ENCODE measurements at regions of chr15 and their contacts with region 1.

Region 1: DNA sequence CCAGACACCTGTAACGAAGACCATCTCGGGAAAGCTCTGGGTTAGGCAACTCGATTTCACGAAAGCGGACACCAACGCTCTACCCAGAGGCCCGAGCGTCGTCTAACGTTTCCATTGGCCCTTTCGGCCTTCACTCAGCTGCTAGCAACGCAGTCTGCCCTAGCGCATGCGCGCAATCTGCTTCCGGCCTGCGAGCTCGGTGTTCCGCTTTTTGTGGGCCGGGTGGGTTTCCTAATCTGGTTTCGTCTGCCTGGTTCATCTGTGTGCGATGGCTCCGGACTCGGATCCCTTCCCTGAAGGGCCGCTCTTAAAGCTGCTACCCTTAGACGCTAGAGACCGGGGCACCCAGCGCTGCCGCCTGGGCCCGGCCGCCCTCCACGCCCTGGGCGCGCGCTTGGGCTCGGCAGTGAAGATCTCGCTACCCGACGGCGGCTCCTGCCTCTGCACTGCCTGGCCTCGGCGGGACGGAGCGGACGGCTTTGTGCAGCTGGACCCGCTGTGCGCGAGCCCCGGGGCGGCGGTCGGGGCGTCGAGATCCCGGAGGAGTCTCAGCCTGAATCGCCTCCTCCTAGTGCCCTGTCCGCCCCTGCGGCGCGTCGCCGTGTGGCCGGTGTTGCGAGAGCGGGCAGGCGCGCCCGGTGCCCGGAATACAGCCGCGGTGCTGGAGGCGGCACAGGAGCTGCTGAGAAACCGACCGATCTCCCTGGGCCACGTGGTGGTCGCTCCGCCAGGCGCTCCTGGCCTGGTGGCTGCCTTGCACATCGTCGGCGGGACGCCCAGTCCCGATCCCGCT is 24.0 kb upstream of the GATM start:
- DNase-seq: peak; percentile 98
- ATAC-seq: peak; percentile 91
- H3K4me3 ChIP-seq: peak overlapping the region; percentile 62 to 89 (median 86)
- H3K4me3 Mint-ChIP-seq: peak overlapping the region; percentile 96
- H3K27ac ChIP-seq: peak overlapping the region; percentile 88 to 95
- H3K27ac Mint-ChIP-seq: peak overlapping the region; percentile 97
- H3K4me1 ChIP-seq: peaks cover 22% of the 10 kb centered on the region in 2 donors
- H3K4me1 Mint-ChIP-seq: peaks cover 37% of the 10 kb centered on the region
- H3K27me3 ChIP-seq: no peaks in the 10 kb centered on the region
- H3K27me3 Mint-ChIP-seq: no peaks in the 10 kb centered on the region
- CTCF ChIP-seq: no peak

Region 2: GRCh38 chr15:44286814-44287452 is 1115.4 kb before region 1 on chr15:
- CTCF ChIA-PET with region 1: no interaction called
- POLR2A ChIA-PET with region 1: no interaction called
- intact Hi-C with region 1: loop called (anchors 10 kb)
- DNase-seq: peak; percentile 25
- ATAC-seq: no peak
- H3K4me3 ChIP-seq: peak overlapping the region in 4 of 5 experiments; percentile 84 to 100 (median 99)
- H3K4me3 Mint-ChIP-seq: peak overlapping the region; percentile 95
- H3K27ac ChIP-seq: peak overlapping the region; percentile 77 to 95
- H3K27ac Mint-ChIP-seq: peak overlapping the region; percentile 97
- H3K4me1 ChIP-seq: peaks cover 22 to 29% of the 10 kb centered on the region in 2 donors
- H3K4me1 Mint-ChIP-seq: peaks cover 37% of the 10 kb centered on the region
- H3K27me3 ChIP-seq: no peaks in the 10 kb centered on the region
- H3K27me3 Mint-ChIP-seq: peaks cover 4% of the 10 kb centered on the region
- CTCF ChIP-seq: peak; percentile 46

Region 3: GRCh38 chr15:45126535-45127158 is 275.7 kb before region 1 on chr15:
- CTCF ChIA-PET with region 1: interaction called, 28 read pairs
- POLR2A ChIA-PET with region 1: no interaction called
- intact Hi-C with region 1: loop called (anchors 1 kb)
- DNase-seq: peak; percentile 70
- ATAC-seq: peak; percentile 59
- H3K4me3 ChIP-seq: no peak overlapping the region
- H3K4me3 Mint-ChIP-seq: no peak overlapping the region
- H3K27ac ChIP-seq: no peak overlapping the region
- H3K27ac Mint-ChIP-seq: no peak overlapping the region
- H3K4me1 ChIP-seq: peaks cover 15 to 22% of the 10 kb centered on the region in 2 donors
- H3K4me1 Mint-ChIP-seq: peaks cover 8% of the 10 kb centered on the region
- H3K27me3 ChIP-seq: peaks cover 0 to 55% (median 28%) of the 10 kb centered on the region in 4 experiments
- H3K27me3 Mint-ChIP-seq: peaks cover 60% of the 10 kb centered on the region
- CTCF ChIP-seq: peak; percentile 93

Region 4: DNA sequence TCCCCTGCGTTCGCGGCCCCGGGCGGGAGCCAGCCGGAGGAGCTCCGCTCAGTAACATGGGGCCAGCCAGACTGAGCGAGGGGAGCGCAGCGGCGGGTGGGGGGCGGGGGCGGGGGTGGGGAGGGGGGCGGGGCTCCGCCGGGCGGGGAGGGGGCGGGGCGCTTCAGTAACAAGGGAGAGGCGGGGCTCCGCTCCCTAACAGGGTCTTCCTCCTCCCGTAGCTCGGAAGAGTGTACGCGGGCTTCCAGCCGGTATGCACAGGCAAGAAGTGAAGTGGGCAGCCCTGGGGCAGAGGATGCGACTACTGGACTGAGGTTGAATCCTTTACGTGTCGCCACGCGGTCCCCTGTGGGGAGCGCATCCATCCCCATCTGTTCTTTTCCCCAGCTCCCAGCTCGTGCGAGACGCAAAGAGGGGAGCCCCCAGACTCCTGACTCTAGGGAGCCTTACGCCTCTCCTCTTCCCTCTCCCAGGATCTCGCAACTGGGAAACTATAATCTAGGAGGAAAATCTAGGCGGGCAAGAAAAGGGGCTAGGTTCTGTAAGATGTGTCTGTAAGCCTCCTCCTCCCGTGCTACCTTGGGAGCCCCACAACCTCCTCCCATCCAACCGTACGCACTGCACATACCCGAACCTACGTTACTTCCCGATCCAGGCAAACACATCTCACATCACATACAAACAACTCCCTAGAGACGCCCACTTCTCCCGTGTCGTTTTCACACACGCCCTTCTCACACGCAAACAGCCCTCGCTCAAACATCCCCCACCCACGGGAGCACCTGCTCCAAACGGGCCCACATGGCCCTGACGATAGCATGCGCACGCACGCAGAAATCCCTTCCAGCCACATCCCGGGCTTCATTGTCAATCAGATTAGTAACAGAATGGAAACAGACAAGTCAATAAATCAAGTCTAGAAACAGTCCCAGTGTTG is 214.2 kb before region 1 on chr15 and contains the start of gene SHF:
- CTCF ChIA-PET with region 1: interaction called, 4 read pairs
- POLR2A ChIA-PET with region 1: interaction called, 4 read pairs
- intact Hi-C with region 1: loop called (anchors 1 kb)
- DNase-seq: peak; percentile 87
- ATAC-seq: peak; percentile 79
- H3K4me3 ChIP-seq: peak within 1 kb of the TSS; percentile 32 to 98 (median 77)
- H3K4me3 Mint-ChIP-seq: peak within 1 kb of the TSS; percentile 91
- H3K27ac ChIP-seq: peak within 1 kb of the TSS; percentile 73 to 77
- H3K27ac Mint-ChIP-seq: peak within 1 kb of the TSS; percentile 78
- H3K4me1 ChIP-seq: peaks cover 0 to 15% of the 10 kb centered on the region in 2 donors
- H3K4me1 Mint-ChIP-seq: peaks cover 20% of the 10 kb centered on the region
- H3K27me3 ChIP-seq: no peaks in the 10 kb centered on the region
- H3K27me3 Mint-ChIP-seq: peaks cover 7% of the 10 kb centered on the region
- CTCF ChIP-seq: no peak
- total RNA-seq, gene SHF: 15.4 and 16.9 TPM in 2 replicates

Region 5: DNA sequence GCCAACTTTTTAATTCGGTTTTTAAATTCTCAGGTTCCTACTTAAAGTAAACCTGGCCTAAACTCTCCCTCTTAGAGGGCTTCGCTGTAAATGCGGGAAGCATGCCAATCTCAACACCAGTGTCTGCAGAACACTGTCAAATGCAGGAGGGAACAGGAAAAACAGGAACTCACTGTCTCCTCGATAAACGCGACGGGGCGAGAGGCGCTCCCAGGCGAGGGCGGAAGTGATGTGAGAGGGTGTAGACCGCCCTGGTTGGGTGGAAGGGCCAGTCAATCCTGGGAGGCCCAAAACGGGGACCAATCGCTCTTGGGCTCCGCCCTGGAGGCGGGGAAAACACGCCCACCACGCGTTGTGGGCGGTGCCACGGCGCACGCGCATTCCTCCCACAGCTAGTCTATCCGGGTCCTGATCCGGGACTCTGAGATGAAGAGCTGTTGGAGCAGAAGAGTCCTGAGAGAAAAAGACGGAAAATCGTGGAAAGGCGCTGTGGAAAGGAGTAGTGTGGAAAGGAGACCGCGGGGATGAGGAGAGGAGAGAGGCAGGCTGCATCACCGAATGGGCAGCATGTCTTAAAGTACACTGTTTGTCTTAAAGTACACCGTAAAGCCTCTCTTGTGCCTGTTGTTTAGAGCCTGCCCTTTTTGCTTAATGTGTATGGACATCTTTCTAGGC is 123.2 kb before region 1 on chr15:
- CTCF ChIA-PET with region 1: interaction called, 7 read pairs
- POLR2A ChIA-PET with region 1: interaction called, 6 read pairs
- intact Hi-C with region 1: loop called (anchors 1 kb)
- DNase-seq: peak; percentile 97
- ATAC-seq: peak; percentile 99
- H3K4me3 ChIP-seq: peak overlapping the region; percentile 58 to 88 (median 69)
- H3K4me3 Mint-ChIP-seq: peak overlapping the region; percentile 94
- H3K27ac ChIP-seq: peak overlapping the region; percentile 66 to 68
- H3K27ac Mint-ChIP-seq: peak overlapping the region; percentile 88
- H3K4me1 ChIP-seq: peaks cover 12 to 16% of the 10 kb centered on the region in 2 donors
- H3K4me1 Mint-ChIP-seq: peaks cover 13% of the 10 kb centered on the region
- H3K27me3 ChIP-seq: peaks cover 0 to 5% (median 0%) of the 10 kb centered on the region in 4 experiments
- H3K27me3 Mint-ChIP-seq: peaks cover 9% of the 10 kb centered on the region
- CTCF ChIP-seq: no peak

Region 6: GRCh38 chr15:45378149-45378912 is 24.0 kb before region 1 on chr15 and contains the start of gene GATM:
- CTCF ChIA-PET with region 1: interaction called, 34 read pairs
- POLR2A ChIA-PET with region 1: interaction called, 4 read pairs
- intact Hi-C with region 1: loop called (anchors 1 kb)
- DNase-seq: peak; percentile 85
- ATAC-seq: peak; percentile 86
- H3K4me3 ChIP-seq: peak within 1 kb of the TSS; percentile 38 to 86 (median 72)
- H3K4me3 Mint-ChIP-seq: peak within 1 kb of the TSS; percentile 90
- H3K27ac ChIP-seq: peak within 1 kb of the TSS; percentile 51 to 63
- H3K27ac Mint-ChIP-seq: peak within 1 kb of the TSS; percentile 89
- H3K4me1 ChIP-seq: peaks cover 9 to 25% of the 10 kb centered on the region in 2 donors
- H3K4me1 Mint-ChIP-seq: peaks cover 20% of the 10 kb centered on the region
- H3K27me3 ChIP-seq: peaks cover 0 to 20% (median 2%) of the 10 kb centered on the region in 4 experiments
- H3K27me3 Mint-ChIP-seq: peaks cover 3% of the 10 kb centered on the region
- CTCF ChIP-seq: peak; percentile 23
- total RNA-seq, gene GATM: 16.6 and 18.2 TPM in 2 replicates

Region 7: GRCh38 chr15:45429974-45430792 is 27.8 kb after region 1 on chr15:
- CTCF ChIA-PET with region 1: interaction called, 15 read pairs
- POLR2A ChIA-PET with region 1: no interaction called
- intact Hi-C with region 1: no loop called
- DNase-seq: peak; percentile 89
- ATAC-seq: peak; percentile 90
- H3K4me3 ChIP-seq: peak overlapping the region in 4 of 5 experiments; percentile 27 to 55 (median 51)
- H3K4me3 Mint-ChIP-seq: peak overlapping the region; percentile 67
- H3K27ac ChIP-seq: no peak overlapping the region
- H3K27ac Mint-ChIP-seq: no peak overlapping the region
- H3K4me1 ChIP-seq: peaks cover 4 to 8% of the 10 kb centered on the region in 2 donors
- H3K4me1 Mint-ChIP-seq: peaks cover 2% of the 10 kb centered on the region
- H3K27me3 ChIP-seq: peaks cover 0 to 10% (median 1%) of the 10 kb centered on the region in 4 experiments
- H3K27me3 Mint-ChIP-seq: peaks cover 6% of the 10 kb centered on the region
- CTCF ChIP-seq: peak; percentile 100

Measured in B cell (primary cell).